ENCODE measurements at regions of chr3 and their contacts with region 1.

Region 1: DNA sequence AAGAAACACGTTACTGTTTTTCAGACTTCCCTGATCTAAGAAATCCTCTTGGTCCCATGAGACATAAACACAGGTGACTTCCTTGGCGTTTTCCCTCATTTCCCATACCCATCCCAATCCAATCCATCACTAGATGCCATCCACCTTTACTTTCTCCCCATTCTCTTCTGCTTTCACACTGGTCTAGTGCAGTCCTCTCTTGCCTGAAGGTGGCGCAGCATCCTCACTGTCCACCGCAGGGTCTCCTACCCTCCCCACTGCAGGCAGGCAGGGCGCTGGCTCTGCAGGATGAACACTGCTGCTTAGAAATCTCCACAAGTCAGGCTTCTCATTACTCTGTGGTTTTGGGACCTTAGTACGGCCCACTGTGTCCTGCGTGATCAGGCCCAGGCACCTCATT is 58.2 kb downstream of the RAB7A start:
- DNase-seq: peak; percentile 44 to 65 (median 46)
- H3K4me3 ChIP-seq: no peak overlapping the region
- H3K4me3 Mint-ChIP-seq: no peak overlapping the region
- H3K27ac ChIP-seq: peak overlapping the region in 1 of 2 donors; percentile 46
- H3K27ac Mint-ChIP-seq: peak overlapping the region in 3 of 7 donors; percentile 35 to 63 (median 63)
- H3K4me1 ChIP-seq: peaks cover 46 to 55% of the 10 kb centered on the region in 2 donors
- H3K4me1 Mint-ChIP-seq: peaks cover 78% of the 10 kb centered on the region
- H3K27me3 ChIP-seq: no peaks in the 10 kb centered on the region
- H3K27me3 Mint-ChIP-seq: no peaks in the 10 kb centered on the region
- CTCF ChIP-seq: peak; percentile 73

Region 2: GRCh38 chr3:128794770-128795649 is 10.8 kb after region 1 on chr3:
- intact Hi-C with region 1: loop called in 1 of 2 experiments (anchors 1 kb)
- DNase-seq: peak; percentile 57 to 68 (median 57)
- H3K4me3 ChIP-seq: no peak overlapping the region
- H3K4me3 Mint-ChIP-seq: no peak overlapping the region
- H3K27ac ChIP-seq: peak overlapping the region in 1 of 2 donors; percentile 71
- H3K27ac Mint-ChIP-seq: peak overlapping the region; percentile 49 to 83 (median 72)
- H3K4me1 ChIP-seq: peaks cover 8 to 18% of the 10 kb centered on the region in 2 donors
- H3K4me1 Mint-ChIP-seq: peaks cover 38% of the 10 kb centered on the region
- H3K27me3 ChIP-seq: no peaks in the 10 kb centered on the region
- H3K27me3 Mint-ChIP-seq: peaks cover 0 to 1% (median 0%) of the 10 kb centered on the region in 3 donors
- CTCF ChIP-seq: peak; percentile 88

Region 3: GRCh38 chr3:128932516-128933212 is 148.4 kb after region 1 on chr3:
- intact Hi-C with region 1: no loop called
- DNase-seq: no peak
- H3K4me3 ChIP-seq: no peak overlapping the region
- H3K4me3 Mint-ChIP-seq: no peak overlapping the region
- H3K27ac ChIP-seq: no peak overlapping the region
- H3K27ac Mint-ChIP-seq: no peak overlapping the region
- H3K4me1 ChIP-seq: no peaks in the 10 kb centered on the region
- H3K4me1 Mint-ChIP-seq: no peaks in the 10 kb centered on the region
- H3K27me3 ChIP-seq: no peaks in the 10 kb centered on the region
- H3K27me3 Mint-ChIP-seq: peaks cover 0 to 4% (median 3%) of the 10 kb centered on the region in 3 donors
- CTCF ChIP-seq: no peak

Region 4: GRCh38 chr3:129112308-129113052 is 328.2 kb after region 1 on chr3:
- intact Hi-C with region 1: no loop called
- DNase-seq: peak; percentile 48 to 71 (median 63)
- H3K4me3 ChIP-seq: no peak overlapping the region
- H3K4me3 Mint-ChIP-seq: no peak overlapping the region
- H3K27ac ChIP-seq: peak overlapping the region in 1 of 2 donors; percentile 36
- H3K27ac Mint-ChIP-seq: peak overlapping the region in 6 of 7 donors; percentile 13 to 84 (median 66)
- H3K4me1 ChIP-seq: peaks cover 8 to 14% of the 10 kb centered on the region in 2 donors
- H3K4me1 Mint-ChIP-seq: peaks cover 21% of the 10 kb centered on the region
- H3K27me3 ChIP-seq: no peaks in the 10 kb centered on the region
- H3K27me3 Mint-ChIP-seq: no peaks in the 10 kb centered on the region
- CTCF ChIP-seq: no peak

Measured in CD14-positive monocyte (primary cell).